ENCODE measurements at regions of chr12 and their contacts with region 1.

Region 1: DNA sequence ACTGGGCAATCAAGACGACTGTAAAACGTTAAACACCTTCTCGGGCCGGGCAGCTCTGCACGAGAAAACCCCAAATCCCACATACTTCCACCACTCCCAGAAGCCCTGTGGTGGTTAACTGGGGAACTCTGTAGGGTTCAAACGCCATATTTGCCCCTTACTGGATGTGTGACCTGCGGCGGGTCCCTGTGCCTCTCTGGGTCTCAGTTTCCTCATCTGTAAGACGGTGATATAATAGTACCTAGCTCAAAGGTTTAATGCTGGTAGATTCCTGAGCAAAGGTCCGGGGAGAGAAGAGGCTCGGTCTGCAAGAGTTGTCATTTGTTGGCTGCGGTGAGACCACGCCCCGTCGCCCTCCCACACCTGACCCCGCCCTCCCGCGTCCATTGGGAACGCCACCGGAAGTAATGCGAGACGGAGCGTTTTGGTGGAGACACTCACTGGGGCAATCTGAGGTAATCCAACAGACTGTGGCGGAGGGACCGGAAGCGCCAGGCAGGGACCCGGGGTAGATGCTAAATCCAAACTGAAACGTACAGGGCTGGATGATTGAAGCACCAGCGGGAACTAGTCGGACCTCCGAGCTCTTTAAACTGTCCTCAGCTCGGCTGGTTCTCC is 661 bp upstream of the OGFOD2 start:
- DNase-seq: peak; percentile 98
- H3K4me3 Mint-ChIP-seq: peak overlapping the region; percentile 93
- H3K27ac Mint-ChIP-seq: peak overlapping the region; percentile 98
- H3K4me1 Mint-ChIP-seq: peaks cover 11% of the 10 kb centered on the region
- H3K27me3 Mint-ChIP-seq: no peaks in the 10 kb centered on the region

Region 2: DNA sequence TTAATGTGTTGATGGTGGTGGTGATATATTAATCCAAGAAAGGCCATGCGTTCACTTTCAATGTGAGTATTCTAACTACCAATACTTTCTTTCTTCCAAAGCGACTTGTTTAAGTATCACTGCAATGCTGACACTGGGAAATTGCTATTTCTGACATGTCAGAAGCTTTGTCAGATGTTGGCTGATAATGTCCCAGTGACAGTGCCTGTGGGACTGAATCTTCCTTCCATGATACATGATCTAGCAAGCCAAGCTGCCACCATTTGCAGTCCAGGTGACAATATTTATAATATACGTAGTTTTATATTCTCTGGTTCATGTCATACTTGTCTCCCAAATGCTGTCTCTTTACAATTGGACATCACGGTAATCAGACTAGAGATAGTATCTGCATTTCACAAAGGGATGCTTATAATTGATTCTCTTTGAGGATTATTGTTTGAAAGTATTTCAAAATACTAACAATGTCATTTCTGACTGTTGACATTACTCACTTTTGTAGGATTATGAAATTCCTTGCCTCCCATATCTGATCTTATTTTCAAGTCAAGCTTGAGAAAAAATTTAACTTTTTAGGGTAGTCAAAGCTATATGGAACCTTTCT is 390.1 kb before region 1 on chr12:
- intact Hi-C with region 1: no loop called
- DNase-seq: no peak
- H3K4me3 Mint-ChIP-seq: no peak overlapping the region
- H3K27ac Mint-ChIP-seq: no peak overlapping the region
- H3K4me1 Mint-ChIP-seq: no peaks in the 10 kb centered on the region
- H3K27me3 Mint-ChIP-seq: no peaks in the 10 kb centered on the region

Region 3: DNA sequence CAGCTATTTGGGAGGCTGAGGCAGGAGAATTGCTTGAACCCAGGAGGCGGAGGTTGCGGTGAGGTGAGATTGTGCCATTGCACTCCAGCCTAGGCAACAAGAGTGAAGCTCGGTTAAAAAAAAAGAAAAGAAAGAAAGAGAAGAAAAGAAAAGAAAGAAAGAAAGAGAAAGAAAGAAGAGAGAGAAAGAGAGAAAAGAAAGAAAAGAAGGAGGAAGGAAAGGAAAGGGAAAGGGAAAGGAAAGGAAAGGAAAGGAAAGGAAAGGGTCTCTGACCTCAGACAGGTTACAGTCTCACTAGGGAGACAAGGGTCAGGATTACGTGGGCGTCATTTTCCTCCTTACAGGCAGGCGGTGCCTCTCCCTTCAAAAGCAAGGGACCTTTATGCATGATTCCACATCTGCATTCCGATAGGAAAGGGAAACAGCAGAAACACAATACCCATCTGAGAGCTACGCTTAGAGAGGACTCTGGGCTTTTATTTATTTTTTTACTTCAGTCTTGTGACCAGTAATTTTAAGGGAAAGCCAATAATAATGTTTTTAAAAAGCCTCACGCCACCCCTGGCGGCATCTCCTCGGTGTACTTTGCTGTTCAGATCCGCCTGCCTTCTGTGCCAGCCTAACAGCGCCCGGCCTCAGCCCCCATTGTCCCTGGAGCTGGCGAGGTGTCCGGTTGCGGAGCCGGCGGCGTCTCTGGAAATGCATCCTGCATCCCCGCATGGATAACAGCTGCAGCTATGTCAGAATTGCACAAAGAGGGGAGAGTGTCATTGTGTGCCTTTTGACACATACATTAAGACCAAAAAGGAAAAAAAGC is 140.1 kb before region 1 on chr12:
- intact Hi-C with region 1: no loop called
- DNase-seq: no peak
- H3K4me3 Mint-ChIP-seq: peak overlapping the region; percentile 91
- H3K27ac Mint-ChIP-seq: peak overlapping the region; percentile 77
- H3K4me1 Mint-ChIP-seq: peaks cover 23% of the 10 kb centered on the region
- H3K27me3 Mint-ChIP-seq: peaks cover 23% of the 10 kb centered on the region

Region 4: GRCh38 chr12:122845041-122845864 is 129.1 kb before region 1 on chr12:
- intact Hi-C with region 1: no loop called
- DNase-seq: no peak
- H3K4me3 Mint-ChIP-seq: no peak overlapping the region
- H3K27ac Mint-ChIP-seq: no peak overlapping the region
- H3K4me1 Mint-ChIP-seq: no peaks in the 10 kb centered on the region
- H3K27me3 Mint-ChIP-seq: no peaks in the 10 kb centered on the region

Region 5: DNA sequence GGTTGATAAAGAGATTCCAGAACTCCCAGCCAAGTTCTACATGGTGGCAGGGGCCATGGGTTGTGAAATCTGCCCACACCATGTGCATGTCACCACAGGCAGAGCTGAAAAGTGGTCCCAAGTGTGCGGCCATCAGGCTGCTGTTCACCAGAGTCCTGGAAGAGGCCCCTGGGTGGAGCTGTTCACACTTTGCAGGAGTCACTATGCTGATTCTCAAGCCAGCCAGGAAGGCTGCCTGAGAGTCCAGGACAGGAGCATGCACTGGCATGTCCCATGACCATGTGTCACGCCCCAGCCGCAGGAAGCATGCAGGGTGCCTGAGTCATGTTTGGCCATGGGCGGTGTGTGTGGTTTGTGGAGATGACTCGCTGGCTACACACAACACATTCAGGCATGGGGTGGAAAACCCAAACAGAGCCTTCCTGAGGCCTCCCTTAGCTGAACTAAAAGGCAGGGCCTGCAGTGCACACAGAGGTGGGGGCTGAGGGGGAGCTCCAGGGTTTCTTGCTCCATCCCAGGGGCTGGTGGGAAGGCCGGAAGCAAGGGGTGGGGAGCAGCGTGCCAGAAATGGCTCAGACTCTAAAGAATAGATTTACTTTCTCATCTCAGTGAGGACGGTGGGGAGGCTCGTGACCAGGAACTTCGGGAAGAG is 27.6 kb before region 1 on chr12:
- intact Hi-C with region 1: loop called (anchors 2 kb)
- DNase-seq: peak; percentile 75
- H3K4me3 Mint-ChIP-seq: peak overlapping the region; percentile 61
- H3K27ac Mint-ChIP-seq: peak overlapping the region; percentile 83
- H3K4me1 Mint-ChIP-seq: peaks cover 26% of the 10 kb centered on the region
- H3K27me3 Mint-ChIP-seq: no peaks in the 10 kb centered on the region

Region 6: DNA sequence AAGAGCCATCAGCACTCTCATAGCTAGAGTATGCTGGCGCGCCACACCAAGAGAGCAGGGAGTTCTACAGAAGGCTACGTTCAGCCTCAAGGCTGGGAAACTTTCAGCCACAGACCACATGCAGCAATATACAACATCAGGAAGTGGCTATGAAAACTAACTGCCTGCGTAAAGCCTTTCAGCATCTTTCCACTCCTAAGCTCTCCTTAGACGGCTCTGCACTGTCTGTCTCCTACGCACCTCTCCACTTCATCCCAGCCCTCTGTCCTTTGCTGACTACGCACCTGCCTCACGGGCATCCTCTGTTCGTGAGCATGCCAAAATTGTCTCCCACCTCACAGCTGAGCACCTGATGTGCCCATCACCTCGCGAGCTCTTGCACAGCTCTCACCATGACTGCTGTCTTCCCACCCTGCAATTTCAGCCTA is 248.9 kb after region 1 on chr12:
- intact Hi-C with region 1: loop called (anchors 2 kb)
- DNase-seq: peak; percentile 60
- H3K4me3 Mint-ChIP-seq: peak overlapping the region; percentile 77
- H3K27ac Mint-ChIP-seq: peak overlapping the region; percentile 97
- H3K4me1 Mint-ChIP-seq: peaks cover 26% of the 10 kb centered on the region
- H3K27me3 Mint-ChIP-seq: no peaks in the 10 kb centered on the region